CD8-positive, alpha-beta T cell (primary cell): ENCODE measurements at regions of chr16 and their contacts with region 1.

Region 1: GRCh38 chr16:2155091-2156021 is at the start of gene TRAF7:
- DNase-seq: peak; percentile 93 to 100 (median 96)
- ATAC-seq: peak; percentile 91
- H3K4me3 ChIP-seq: peak within 1 kb of the TSS; percentile 69 to 95
- H3K4me3 Mint-ChIP-seq: peak within 1 kb of the TSS; percentile 93
- H3K27ac ChIP-seq: peak within 1 kb of the TSS; percentile 79 to 82
- H3K27ac Mint-ChIP-seq: peak within 1 kb of the TSS; percentile 87
- H3K4me1 ChIP-seq: peaks cover 66% of the 10 kb centered on the region
- H3K4me1 Mint-ChIP-seq: peaks cover 60% of the 10 kb centered on the region
- H3K27me3 ChIP-seq: peaks cover 0 to 2% of the 10 kb centered on the region in 2 experiments
- H3K27me3 Mint-ChIP-seq: no peaks in the 10 kb centered on the region
- CTCF ChIP-seq: no peak
- total RNA-seq, gene TRAF7: 21.4 to 21.8 TPM

Region 2: GRCh38 chr16:1745181-1745899 is 410.0 kb before region 1 on chr16:
- CTCF ChIA-PET with region 1: no interaction called
- POLR2A ChIA-PET with region 1: no interaction called
- intact Hi-C with region 1: no loop called
- DNase-seq: no peak
- ATAC-seq: no peak
- H3K4me3 ChIP-seq: no peak overlapping the region
- H3K4me3 Mint-ChIP-seq: no peak overlapping the region
- H3K27ac ChIP-seq: no peak overlapping the region
- H3K27ac Mint-ChIP-seq: no peak overlapping the region
- H3K4me1 ChIP-seq: no peaks in the 10 kb centered on the region
- H3K4me1 Mint-ChIP-seq: no peaks in the 10 kb centered on the region
- H3K27me3 ChIP-seq: no peaks in the 10 kb centered on the region
- H3K27me3 Mint-ChIP-seq: no peaks in the 10 kb centered on the region
- CTCF ChIP-seq: no peak

Region 3: DNA sequence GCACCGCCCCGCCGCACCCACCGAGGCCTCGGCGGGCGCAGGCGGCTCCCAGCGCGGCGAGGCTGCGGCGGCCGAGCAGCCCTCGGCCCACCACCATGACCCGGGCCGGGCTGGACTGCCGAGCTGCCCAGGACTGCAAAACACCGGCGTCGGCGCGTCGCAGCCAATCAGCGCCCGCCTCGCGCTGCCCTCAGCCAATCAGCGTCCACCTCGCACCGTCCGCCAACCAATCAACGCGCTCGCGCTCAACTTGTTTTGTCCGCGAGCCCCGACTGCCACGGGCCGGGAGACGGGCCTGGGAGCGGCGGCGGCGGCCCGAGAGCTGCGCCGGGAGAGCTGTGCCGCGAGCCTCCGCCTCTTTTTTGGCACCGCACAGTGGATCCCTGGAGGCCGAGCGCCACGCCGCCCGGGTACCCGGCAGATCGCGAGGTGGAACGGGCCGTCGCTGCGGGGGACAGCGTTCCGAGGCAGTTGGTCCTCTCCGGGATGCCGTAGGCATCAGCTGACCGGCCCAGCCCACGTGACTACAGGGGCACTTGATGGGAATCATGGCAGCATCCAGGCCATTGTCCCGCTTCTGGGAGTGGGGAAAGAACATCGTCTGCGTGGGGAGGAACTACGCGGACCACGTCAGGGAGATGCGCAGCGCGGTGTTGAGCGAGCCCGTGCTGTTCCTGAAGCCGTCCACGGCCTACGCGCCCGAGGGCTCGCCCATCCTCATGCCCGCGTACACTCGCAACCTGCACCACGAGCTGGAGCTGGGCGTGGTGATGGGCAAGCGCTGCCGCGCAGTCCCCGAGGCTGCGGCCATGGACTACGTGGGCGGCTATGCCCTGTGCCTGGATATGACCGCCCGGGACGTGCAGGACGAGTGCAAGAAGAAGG is 328.4 kb before region 1 on chr16 and contains the starts of genes FAHD1 and HAGH:
- CTCF ChIA-PET with region 1: no interaction called
- POLR2A ChIA-PET with region 1: interaction called, 8 read pairs
- intact Hi-C with region 1: loop called in 1 of 2 experiments (anchors 1 kb)
- DNase-seq: peak; percentile 83 to 96 (median 89)
- ATAC-seq: peak; percentile 79
- H3K4me3 ChIP-seq: peak within 1 kb of the TSS; percentile 72 to 91
- H3K4me3 Mint-ChIP-seq: peak within 1 kb of the TSS; percentile 90
- H3K27ac ChIP-seq: peak within 1 kb of the TSS; percentile 73 to 78
- H3K27ac Mint-ChIP-seq: peak within 1 kb of the TSS; percentile 95
- H3K4me1 ChIP-seq: peaks cover 46% of the 10 kb centered on the region
- H3K4me1 Mint-ChIP-seq: peaks cover 48% of the 10 kb centered on the region
- H3K27me3 ChIP-seq: no peaks in the 10 kb centered on the region
- H3K27me3 Mint-ChIP-seq: no peaks in the 10 kb centered on the region
- CTCF ChIP-seq: no peak
- total RNA-seq, gene FAHD1: 11.7 to 13.7 TPM
- total RNA-seq, gene HAGH: 32.5 to 41.1 TPM

Region 4: GRCh38 chr16:1991948-1992703 is 163.2 kb before region 1 on chr16:
- CTCF ChIA-PET with region 1: no interaction called
- POLR2A ChIA-PET with region 1: interaction called, 9 read pairs
- intact Hi-C with region 1: loop called in 1 of 2 experiments (anchors 1 kb)
- DNase-seq: peak; percentile 95 to 99 (median 97)
- ATAC-seq: peak; percentile 88
- H3K4me3 ChIP-seq: peak overlapping the region; percentile 53 to 60
- H3K4me3 Mint-ChIP-seq: peak overlapping the region; percentile 39
- H3K27ac ChIP-seq: peak overlapping the region; percentile 27 to 45
- H3K27ac Mint-ChIP-seq: peak overlapping the region; percentile 80
- H3K4me1 ChIP-seq: peaks cover 19% of the 10 kb centered on the region
- H3K4me1 Mint-ChIP-seq: peaks cover 26% of the 10 kb centered on the region
- H3K27me3 ChIP-seq: peaks cover 9 to 13% of the 10 kb centered on the region in 2 experiments
- H3K27me3 Mint-ChIP-seq: peaks cover 9% of the 10 kb centered on the region
- CTCF ChIP-seq: no peak

Region 5: DNA sequence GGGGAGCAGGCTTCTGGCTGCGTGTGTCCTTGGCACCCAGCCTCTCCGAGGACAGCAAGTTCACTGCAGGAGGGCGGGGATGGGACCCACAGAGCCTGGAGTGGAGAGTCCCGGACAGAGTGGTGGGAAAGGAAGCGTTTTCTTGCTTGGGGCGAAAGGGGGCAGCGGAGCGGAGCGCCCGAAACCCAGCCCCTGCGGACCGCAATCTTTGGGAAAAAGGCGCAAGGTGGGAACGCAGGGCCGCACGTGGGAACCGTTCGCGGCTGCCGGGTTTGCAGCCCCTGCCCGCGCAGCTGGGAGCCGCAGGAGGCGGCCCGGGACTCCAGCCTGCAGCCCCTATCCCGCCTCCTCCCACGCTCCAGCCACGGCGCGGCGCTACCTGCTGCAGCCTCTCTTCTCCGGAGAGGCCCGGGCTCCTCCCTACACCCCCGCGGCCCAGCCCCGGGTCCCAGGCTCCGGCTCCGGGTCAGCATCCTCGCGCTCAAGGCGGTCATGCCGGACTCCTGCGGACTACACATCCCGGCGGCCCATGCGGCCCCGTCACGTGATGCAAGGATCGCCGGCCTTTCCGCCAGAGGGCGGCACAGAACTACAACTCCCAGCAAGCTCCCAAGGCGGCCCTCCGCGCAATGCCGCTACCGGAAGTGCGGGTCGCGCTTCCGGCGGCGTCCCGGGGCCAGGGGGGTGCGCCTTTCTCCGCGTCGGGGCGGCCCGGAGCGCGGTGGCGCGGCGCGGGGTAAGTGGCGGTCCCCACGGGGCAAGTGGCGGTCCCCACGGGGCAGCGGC is 107.8 kb before region 1 on chr16 and contains the starts of genes NTHL1 and TSC2:
- CTCF ChIA-PET with region 1: interaction called, 6 read pairs
- POLR2A ChIA-PET with region 1: interaction called, 16 read pairs
- intact Hi-C with region 1: loop called (anchors 1 kb)
- DNase-seq: peak; percentile 82 to 96 (median 92)
- ATAC-seq: peak; percentile 89
- H3K4me3 ChIP-seq: peak within 1 kb of the TSS; percentile 90 to 93
- H3K4me3 Mint-ChIP-seq: peak within 1 kb of the TSS; percentile 91
- H3K27ac ChIP-seq: peak within 1 kb of the TSS; percentile 60 to 64
- H3K27ac Mint-ChIP-seq: peak within 1 kb of the TSS; percentile 62
- H3K4me1 ChIP-seq: peaks cover 17% of the 10 kb centered on the region
- H3K4me1 Mint-ChIP-seq: peaks cover 24% of the 10 kb centered on the region
- H3K27me3 ChIP-seq: no peaks in the 10 kb centered on the region
- H3K27me3 Mint-ChIP-seq: no peaks in the 10 kb centered on the region
- CTCF ChIP-seq: peak; percentile 39
- total RNA-seq, gene NTHL1: 1.7 to 2.0 TPM
- total RNA-seq, gene TSC2: 76.2 to 84.1 TPM

Region 6: DNA sequence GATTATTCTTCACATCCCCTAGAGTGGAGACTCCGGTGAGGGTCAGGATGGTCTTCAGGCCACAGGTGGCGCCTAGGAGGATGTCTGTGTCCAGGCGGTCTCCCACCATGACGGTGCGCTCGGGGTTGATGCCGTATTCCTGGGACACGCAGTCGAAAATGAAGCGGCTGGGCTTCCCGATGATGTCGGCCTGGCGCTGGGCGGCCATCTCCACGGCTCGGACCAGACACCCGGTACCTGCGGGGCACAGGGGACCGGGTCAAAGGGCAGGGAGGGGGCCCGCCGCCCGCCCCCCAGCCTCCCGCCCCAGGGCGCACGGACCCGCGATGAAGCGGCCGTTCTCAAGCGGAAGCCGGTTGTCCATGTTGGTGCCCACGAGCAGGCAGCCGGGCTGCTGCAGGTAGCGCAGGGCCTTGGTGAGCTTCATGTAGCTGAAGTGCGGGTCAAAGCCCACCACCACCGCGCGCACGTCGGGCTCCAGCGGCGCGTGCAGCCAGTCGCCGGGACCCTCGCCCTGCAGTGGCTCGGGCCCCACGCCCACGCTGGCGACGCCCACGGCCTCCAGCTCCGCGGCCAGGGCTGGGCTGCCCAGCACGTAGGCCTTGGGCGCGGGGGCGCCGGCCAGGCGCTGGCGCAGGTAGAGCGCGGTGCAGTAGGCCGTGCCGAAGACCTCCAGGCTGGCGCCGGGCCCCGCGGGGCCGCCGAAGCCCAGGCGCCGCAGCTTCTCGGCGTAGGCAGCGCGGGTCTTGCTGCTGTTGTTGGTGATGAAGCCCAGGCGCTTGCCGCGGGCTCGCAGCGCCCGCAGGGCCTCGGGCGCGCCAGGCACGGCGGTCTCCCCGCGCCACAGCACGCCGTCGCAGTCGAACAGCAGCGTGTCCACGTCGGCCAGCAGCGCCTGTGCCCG is 58.7 kb after region 1 on chr16:
- CTCF ChIA-PET with region 1: no interaction called
- POLR2A ChIA-PET with region 1: interaction called, 11 read pairs
- intact Hi-C with region 1: no loop called
- DNase-seq: no peak
- ATAC-seq: no peak
- H3K4me3 ChIP-seq: peak overlapping the region; percentile 24 to 70
- H3K4me3 Mint-ChIP-seq: peak overlapping the region; percentile 78
- H3K27ac ChIP-seq: peak overlapping the region in 1 of 2 experiments; percentile 47
- H3K27ac Mint-ChIP-seq: no peak overlapping the region
- H3K4me1 ChIP-seq: peaks cover 14% of the 10 kb centered on the region
- H3K4me1 Mint-ChIP-seq: peaks cover 13% of the 10 kb centered on the region
- H3K27me3 ChIP-seq: no peaks in the 10 kb centered on the region
- H3K27me3 Mint-ChIP-seq: no peaks in the 10 kb centered on the region
- CTCF ChIP-seq: no peak

Region 7: DNA sequence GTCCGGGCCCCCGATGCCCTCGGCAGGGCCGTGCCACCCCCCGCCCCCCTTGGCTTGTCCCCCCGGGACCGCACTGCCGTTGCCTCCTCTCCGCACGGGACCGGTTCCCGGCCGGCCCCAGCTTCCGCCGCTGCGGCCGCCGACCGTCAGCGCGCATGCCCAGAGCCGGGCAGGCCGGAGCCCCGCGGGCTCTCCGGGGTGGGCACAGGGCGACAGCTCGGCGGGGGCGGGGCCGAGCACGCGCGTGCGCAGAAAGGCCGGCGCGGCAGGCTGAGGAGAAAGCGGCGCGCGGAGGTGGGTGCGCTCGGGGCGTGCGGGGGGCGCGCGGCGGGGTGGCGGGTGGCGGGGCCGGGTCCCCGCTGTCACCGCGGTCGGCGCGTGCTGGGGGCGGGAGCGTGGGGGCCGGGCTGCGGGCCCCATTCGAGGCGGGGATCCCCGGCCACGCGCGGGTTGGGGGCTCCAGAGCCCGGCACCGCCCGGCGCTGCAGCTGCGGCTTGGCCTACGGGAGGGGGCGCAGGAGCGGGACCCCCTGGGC is 319.6 kb after region 1 on chr16 and contains the start of gene TBC1D24:
- CTCF ChIA-PET with region 1: no interaction called
- POLR2A ChIA-PET with region 1: interaction called, 3 read pairs
- intact Hi-C with region 1: loop called in 1 of 2 experiments (anchors 1 kb)
- DNase-seq: peak; percentile 48 to 89 (median 77)
- ATAC-seq: peak; percentile 61
- H3K4me3 ChIP-seq: peak within 1 kb of the TSS; percentile 62 to 70
- H3K4me3 Mint-ChIP-seq: peak within 1 kb of the TSS; percentile 77
- H3K27ac ChIP-seq: peak within 1 kb of the TSS in 1 of 2 experiments; percentile 36
- H3K27ac Mint-ChIP-seq: no peak within 1 kb of the TSS
- H3K4me1 ChIP-seq: peaks cover 29% of the 10 kb centered on the region
- H3K4me1 Mint-ChIP-seq: peaks cover 24% of the 10 kb centered on the region
- H3K27me3 ChIP-seq: peaks cover 11 to 20% of the 10 kb centered on the region in 2 experiments
- H3K27me3 Mint-ChIP-seq: peaks cover 15% of the 10 kb centered on the region
- CTCF ChIP-seq: no peak
- total RNA-seq, gene TBC1D24: 2.8 to 3.8 TPM